Right cardiac atrium (tissue), 5 donors: ENCODE measurements at regions of chr1 and their contacts with region 1.

Region 1: DNA sequence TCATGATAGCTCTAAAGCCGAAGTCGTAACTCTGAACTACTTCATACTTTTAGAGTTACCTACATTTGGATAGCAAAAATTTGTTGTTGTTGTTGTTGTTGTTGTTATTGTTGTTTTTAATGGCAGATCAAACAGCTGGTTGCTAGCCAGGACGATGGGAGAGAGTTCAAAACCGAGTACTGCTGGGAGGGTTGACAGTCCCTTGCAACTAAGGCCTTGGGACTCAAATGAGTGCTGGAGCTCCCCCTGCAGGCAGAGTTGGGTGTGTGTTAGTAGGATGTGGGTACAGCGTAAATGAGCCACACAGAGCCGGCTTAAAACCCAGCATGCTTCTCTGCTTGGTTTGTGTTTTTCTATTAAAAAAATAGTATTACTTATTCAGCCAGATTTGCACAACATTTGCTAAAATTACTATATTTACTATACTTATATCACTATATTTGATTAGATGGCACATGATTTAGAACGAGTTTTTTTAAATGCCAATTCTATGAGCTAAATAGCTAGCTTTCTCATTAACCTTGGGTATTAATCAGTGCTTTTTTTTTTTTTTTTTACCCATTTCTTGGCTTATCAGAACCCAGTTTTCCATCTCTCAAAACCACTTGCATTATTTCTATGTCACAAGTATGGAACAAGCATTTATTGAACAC is 129.2 kb upstream of the SYT6 start:
- DNase-seq: peak; percentile 88 to 96 (median 92)
- ATAC-seq: peak; percentile 97
- H3K4me3 ChIP-seq: no peak overlapping the region
- H3K27ac ChIP-seq: no peak overlapping the region
- H3K4me1 ChIP-seq: no peaks in the 10 kb centered on the region
- H3K27me3 ChIP-seq: no peaks in the 10 kb centered on the region

Region 2: DNA sequence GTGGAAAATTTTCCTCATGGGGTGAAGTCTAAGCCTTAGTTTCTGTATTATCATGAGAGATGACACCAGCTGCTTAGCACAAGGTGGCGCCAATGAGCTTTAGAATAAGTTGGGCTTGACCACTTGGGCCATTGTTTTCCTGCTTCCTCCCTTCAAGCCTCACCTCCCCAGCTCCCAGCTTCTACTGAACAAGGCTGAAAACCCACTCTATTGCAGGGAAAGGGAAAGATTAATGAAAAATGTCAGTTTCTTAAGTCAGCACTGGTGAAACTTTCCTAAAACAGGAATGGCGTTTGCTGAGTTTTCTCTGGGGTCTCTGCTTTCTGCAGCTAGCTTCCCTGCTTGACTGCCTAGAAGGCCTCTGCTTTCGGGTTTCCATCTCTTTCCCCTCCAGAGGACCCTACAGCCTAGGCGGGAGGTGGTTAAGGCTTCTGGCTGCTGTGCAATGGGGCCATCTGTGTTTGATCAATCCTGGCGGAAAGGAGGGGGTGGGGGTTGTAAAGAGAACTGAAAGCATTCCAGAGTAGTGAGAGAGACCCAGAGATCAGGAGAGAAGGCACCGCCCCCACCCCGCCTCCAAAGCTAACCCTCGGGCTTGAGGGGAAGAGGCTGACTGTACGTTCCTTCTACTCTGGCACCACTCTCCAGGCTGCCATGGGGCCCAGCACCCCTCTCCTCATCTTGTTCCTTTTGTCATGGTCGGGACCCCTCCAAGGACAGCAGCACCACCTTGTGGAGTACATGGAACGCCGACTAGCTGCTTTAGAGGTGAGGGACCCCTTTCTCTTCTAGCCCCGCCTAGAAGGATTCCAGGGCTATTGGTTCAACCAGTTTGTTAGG is 303.8 kb before region 1 on chr1 and contains the start of gene OLFML3:
- intact Hi-C with region 1: loop called (anchors 2 to 5 kb)
- DNase-seq: peak; percentile 85 to 95 (median 91)
- ATAC-seq: peak; percentile 78 to 79
- H3K4me3 ChIP-seq: peak within 1 kb of the TSS; percentile 16
- H3K27ac ChIP-seq: peak within 1 kb of the TSS; percentile 53
- H3K4me1 ChIP-seq: peaks cover 6% of the 10 kb centered on the region
- H3K27me3 ChIP-seq: no peaks in the 10 kb centered on the region
- total RNA-seq, gene OLFML3: 25.8 to 33.9 (median 31.6) TPM

Region 3: DNA sequence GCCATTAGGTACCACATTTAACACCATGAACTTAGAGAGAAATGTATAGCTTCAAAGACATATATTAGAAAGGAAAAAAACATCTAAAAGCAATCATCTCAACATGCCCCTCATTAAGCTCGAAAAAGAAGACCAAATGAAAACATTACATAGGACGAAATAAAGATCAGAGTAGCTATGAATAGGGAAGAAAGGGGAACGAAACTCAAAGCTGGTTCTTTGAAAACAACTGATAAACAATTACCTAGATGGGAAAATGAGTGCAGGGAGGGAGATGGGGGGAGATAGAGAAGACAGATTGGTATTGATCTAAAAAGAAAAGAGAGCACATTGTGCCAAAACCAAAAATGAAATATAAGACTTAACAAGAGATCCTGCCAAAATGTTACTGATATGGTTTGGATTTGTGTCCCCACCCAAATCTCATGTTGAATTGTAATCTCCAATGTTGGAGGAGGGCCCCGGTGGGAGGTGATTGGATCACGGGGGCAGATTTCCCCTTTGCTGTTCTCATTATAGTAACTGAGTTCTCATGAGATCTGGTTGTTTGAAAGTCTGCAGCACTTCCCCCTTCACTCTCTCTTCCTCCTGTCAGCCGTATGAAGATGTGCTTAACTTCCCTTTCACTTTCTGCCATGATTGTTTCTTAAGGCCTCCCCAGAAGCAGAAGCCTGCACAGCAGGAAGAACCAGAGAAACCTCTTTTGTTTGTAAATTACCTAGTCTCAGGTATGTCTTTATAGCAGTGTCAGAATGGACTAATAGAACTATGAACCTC is 199.5 kb after region 1 on chr1:
- intact Hi-C with region 1: no loop called
- DNase-seq: no peak
- ATAC-seq: no peak
- H3K4me3 ChIP-seq: no peak overlapping the region
- H3K27ac ChIP-seq: no peak overlapping the region
- H3K4me1 ChIP-seq: peaks cover 3% of the 10 kb centered on the region
- H3K27me3 ChIP-seq: no peaks in the 10 kb centered on the region